ENCODE measurements at regions of chr5 and their contacts with region 1.

Region 1: DNA sequence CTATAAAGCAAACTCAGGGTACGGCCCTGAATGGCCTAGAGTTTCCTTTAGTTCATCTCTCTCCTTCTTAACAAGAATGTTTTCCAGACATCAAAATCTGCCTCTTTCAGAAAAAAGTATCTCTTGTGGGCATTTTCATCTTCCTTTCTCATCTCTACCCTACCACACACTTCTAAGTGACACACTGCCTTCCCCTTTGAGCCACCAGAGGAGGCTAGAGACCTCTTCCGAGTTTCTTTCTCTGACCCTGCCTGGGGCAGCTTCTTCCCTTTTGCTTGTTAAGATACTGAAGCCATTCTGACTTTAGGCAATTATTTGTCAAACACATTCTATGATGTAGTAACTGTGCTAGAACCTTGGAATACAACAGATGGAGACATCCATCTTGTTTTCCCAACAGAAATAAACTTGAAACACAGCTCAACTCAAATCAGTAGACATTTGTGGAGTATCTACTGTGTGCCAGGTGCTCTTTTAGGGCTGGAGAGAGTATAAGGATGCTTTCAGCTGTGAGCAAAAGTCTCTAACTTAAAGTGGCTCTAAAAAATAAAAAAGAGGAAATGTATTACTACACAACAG is 8.6 kb upstream of the SV2C start:
- DNase-seq: no peak
- ATAC-seq: no peak
- H3K4me3 ChIP-seq: no peak overlapping the region
- H3K27ac ChIP-seq: no peak overlapping the region
- H3K4me1 ChIP-seq: no peaks in the 10 kb centered on the region
- H3K27me3 ChIP-seq: peaks cover 0 to 55% (median 14%) of the 10 kb centered on the region in 7 donors
- CTCF ChIP-seq: peak in 6 of 9 donors; percentile 26 to 48 (median 42)

Region 2: GRCh38 chr5:76175051-76175666 is 100.6 kb after region 1 on chr5:
- intact Hi-C with region 1: loop called in 1 of 10 experiments (anchors 5 kb)
- DNase-seq: peak in 1 of 2 donors; percentile 18
- ATAC-seq: peak in 1 of 8 donors; percentile 17
- H3K4me3 ChIP-seq: no peak overlapping the region
- H3K27ac ChIP-seq: peak overlapping the region in 1 of 10 donors; percentile 48
- H3K4me1 ChIP-seq: peaks cover 0 to 15% (median 0%) of the 10 kb centered on the region in 9 donors
- H3K27me3 ChIP-seq: peaks cover 0 to 10% (median 0%) of the 10 kb centered on the region in 7 donors
- CTCF ChIP-seq: peak; percentile 17 to 73 (median 66)

Region 3: DNA sequence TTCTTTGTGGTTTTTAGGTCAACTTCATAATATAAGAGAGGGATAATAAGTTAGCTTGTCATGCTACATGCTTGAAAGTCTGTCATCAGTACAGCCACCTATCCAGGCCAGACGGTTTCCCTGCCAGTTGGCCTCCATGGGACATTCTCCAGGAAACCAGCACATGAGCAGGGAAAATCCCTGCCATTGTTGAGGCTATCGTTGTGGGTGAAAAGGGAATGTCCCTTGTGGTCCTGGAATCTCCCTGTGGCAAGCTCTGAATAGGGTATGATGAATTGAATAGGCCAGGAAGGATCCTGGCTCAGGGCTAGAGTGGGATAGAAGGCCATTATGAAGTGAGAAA is 756.5 kb after region 1 on chr5:
- intact Hi-C with region 1: loop called in 1 of 10 experiments (anchors 10 kb)
- DNase-seq: no peak
- ATAC-seq: peak in 4 of 8 donors; percentile 33 to 78 (median 60)
- H3K4me3 ChIP-seq: no peak overlapping the region
- H3K27ac ChIP-seq: no peak overlapping the region
- H3K4me1 ChIP-seq: peaks cover 0 to 7% (median 0%) of the 10 kb centered on the region in 9 donors
- H3K27me3 ChIP-seq: no peaks in the 10 kb centered on the region
- CTCF ChIP-seq: no peak

Measured in heart right ventricle (tissue), 16 donors.